AG04450 (cell line): ENCODE measurements at regions of chr17 and their contacts with region 1.

Region 1: DNA sequence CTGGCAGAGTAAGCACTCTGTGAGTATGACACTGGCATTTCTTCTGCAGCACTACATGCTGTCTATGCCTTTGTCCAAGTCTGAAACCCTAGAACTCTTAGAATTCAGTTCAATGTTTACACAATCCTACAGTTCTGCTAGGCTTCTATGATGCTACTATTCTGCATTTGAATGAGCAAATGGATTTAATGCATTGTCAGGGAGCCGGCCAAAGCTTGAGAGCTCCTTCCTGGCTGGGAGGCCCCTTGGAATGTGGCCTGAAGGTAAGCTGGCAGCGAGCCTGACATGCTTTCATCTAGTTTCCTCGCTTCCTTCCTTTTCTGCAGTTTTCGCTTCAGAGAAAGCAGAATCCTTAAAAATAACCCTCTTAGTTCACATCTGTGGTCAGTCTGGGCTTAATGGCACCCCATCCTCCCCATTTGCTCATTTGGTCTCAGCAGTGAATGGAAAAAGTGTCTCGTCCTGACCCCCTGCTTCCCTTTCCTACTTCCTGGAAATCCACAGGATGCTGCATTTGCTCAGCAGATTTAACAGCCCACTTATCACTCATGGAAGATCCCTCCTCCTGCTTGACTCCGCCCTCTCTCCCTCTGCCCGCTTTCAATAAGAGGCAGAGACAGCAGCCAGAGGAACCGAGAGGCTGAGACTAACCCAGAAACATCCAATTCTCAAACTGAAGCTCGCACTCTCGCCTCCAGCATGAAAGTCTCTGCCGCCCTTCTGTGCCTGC is at the start of gene CCL2:
- DNase-seq: peak; percentile 65
- H3K4me3 ChIP-seq: peak within 1 kb of the TSS; percentile 79
- H3K27ac ChIP-seq: peak within 1 kb of the TSS; percentile 94
- H3K27me3 ChIP-seq: no peaks in the 10 kb centered on the region
- CTCF ChIP-seq: no peak
- polyA plus RNA-seq, gene CCL2: 119 and 176 TPM in 2 replicates

Region 2: GRCh38 chr17:34068506-34069035 is 186.2 kb before region 1 on chr17:
- CTCF ChIA-PET with region 1: no interaction called
- POLR2A ChIA-PET with region 1: no interaction called
- DNase-seq: no peak
- H3K4me3 ChIP-seq: no peak overlapping the region
- H3K27ac ChIP-seq: no peak overlapping the region
- H3K27me3 ChIP-seq: no peaks in the 10 kb centered on the region
- CTCF ChIP-seq: no peak

Region 3: GRCh38 chr17:34235389-34236028 is 19.3 kb before region 1 on chr17:
- CTCF ChIA-PET with region 1: no interaction called
- POLR2A ChIA-PET with region 1: interaction called, 11 read pairs
- DNase-seq: no peak
- H3K4me3 ChIP-seq: no peak overlapping the region
- H3K27ac ChIP-seq: no peak overlapping the region
- H3K27me3 ChIP-seq: no peaks in the 10 kb centered on the region
- CTCF ChIP-seq: no peak

Region 4: DNA sequence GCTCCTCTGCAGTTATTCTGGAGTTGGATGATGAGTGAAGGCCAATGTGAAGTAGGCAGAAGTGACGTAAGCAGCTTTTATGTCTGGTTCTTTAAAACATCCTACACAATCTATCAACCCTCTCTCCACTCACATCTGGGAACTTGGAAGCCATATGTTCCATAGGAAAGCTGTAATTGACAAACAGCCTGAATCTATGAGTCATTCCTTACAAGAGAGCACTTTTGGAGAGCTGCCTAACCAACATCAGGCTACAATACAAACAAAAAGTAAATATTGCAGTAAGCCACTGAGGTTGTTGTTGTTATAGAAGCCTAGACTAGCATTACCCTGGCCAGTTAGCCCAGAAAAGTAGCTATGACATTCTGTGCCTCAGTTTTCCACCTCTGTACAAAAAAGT is 21.1 kb after region 1 on chr17:
- CTCF ChIA-PET with region 1: no interaction called
- POLR2A ChIA-PET with region 1: interaction called, 12 read pairs
- DNase-seq: peak; percentile 95
- H3K4me3 ChIP-seq: no peak overlapping the region
- H3K27ac ChIP-seq: no peak overlapping the region
- H3K27me3 ChIP-seq: peaks cover 2% of the 10 kb centered on the region
- CTCF ChIP-seq: no peak

Region 5: DNA sequence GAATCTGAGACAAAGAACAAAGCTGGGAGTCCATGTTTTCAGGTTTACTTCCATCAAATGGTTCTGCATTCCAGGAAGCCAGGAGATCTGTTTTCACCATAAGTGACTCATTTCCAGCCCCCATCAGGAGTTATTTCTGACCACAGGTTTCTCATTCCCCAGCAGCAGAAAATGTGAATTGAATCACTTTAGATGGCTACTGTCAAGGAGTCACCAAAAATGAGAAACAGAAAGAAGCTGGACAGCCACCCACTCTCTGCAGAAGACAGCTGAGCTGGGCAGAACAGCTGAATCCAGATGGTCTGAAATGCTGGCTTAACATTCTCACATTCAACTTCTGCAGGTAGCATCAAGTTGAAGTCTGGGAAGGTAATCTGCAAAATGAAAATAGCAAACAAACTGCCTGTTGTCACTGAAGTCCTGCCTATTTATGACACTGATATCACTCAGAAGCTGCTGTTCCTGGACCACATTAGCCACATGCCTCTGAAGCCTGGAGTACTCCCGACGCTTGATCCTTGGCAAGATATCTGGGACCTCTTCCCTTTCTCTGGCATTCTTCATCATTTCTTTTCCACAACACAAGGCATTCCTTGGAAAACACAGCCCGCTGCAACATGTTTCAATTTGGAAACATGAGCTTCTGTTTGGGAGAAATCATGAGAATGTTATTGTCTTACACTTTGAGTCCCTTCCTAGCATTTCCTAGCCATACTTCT is 46.0 kb after region 1 on chr17:
- CTCF ChIA-PET with region 1: interaction called, 5 read pairs
- POLR2A ChIA-PET with region 1: interaction called, 11 read pairs
- DNase-seq: no peak
- H3K4me3 ChIP-seq: no peak overlapping the region
- H3K27ac ChIP-seq: peak overlapping the region; percentile 88
- H3K27me3 ChIP-seq: no peaks in the 10 kb centered on the region
- CTCF ChIP-seq: no peak

Region 6: DNA sequence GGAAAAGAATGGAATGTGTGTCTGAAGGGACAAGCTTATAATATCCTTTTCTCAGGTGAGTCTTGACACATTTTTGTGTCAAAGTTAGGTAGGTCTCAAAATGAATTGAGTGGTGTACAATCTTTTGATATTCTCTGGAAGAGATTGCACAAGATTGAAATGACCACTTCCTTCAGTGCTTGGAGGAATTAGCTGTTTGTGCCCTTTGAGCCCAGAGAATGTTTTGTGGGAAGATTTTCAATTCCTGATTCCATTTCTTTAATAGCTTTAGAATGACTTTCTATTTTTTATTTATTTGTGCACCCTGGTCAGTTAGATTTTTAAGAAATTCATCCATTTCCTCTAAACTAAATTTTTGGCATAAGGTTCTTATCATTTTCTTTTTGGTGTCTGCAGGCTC is 99.8 kb after region 1 on chr17:
- CTCF ChIA-PET with region 1: interaction called, 47 read pairs
- POLR2A ChIA-PET with region 1: interaction called, 15 read pairs
- DNase-seq: peak; percentile 16
- H3K4me3 ChIP-seq: no peak overlapping the region
- H3K27ac ChIP-seq: no peak overlapping the region
- H3K27me3 ChIP-seq: no peaks in the 10 kb centered on the region
- CTCF ChIP-seq: no peak

Region 7: DNA sequence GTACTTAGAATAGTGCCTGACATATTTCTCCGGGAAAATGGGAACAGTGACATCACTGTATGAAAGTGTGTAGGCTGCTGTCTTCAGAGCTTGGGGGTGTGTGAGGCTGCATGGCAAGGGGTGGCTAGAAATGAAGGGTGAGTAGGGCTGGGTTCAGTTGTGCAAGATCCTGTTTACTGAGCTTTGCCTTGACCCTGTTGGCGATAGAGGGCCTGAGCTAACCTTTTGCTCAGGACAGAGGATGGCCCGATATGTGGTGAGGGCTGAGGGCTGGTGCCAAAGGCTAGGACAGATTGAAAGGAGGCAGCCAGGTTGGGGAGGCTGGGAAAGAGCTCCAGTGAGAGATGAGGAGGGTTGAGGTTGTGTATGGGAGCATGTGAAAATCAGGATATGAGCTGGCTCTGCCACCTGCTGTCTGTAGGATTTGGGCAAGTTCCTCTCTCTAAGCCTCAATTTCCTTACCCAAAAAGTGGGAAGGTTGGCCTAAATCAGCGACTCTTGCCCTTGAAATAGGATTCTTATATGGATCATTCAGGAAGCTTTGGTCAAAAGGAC is 114.2 kb after region 1 on chr17:
- CTCF ChIA-PET with region 1: no interaction called
- POLR2A ChIA-PET with region 1: no interaction called
- DNase-seq: no peak
- H3K4me3 ChIP-seq: no peak overlapping the region
- H3K27ac ChIP-seq: no peak overlapping the region
- H3K27me3 ChIP-seq: peaks cover 6% of the 10 kb centered on the region
- CTCF ChIP-seq: no peak